ENCODE measurements at regions of chr17 and their contacts with region 1.

Region 1: GRCh38 chr17:9587969-9588656 is 11.7 kb downstream of the CFAP52 start:
- DNase-seq: no peak
- ATAC-seq: no peak
- H3K4me3 ChIP-seq: no peak overlapping the region
- H3K27ac ChIP-seq: no peak overlapping the region
- H3K4me1 ChIP-seq: no peaks in the 10 kb centered on the region
- H3K27me3 ChIP-seq: no peaks in the 10 kb centered on the region
- CTCF ChIP-seq: no peak

Region 2: DNA sequence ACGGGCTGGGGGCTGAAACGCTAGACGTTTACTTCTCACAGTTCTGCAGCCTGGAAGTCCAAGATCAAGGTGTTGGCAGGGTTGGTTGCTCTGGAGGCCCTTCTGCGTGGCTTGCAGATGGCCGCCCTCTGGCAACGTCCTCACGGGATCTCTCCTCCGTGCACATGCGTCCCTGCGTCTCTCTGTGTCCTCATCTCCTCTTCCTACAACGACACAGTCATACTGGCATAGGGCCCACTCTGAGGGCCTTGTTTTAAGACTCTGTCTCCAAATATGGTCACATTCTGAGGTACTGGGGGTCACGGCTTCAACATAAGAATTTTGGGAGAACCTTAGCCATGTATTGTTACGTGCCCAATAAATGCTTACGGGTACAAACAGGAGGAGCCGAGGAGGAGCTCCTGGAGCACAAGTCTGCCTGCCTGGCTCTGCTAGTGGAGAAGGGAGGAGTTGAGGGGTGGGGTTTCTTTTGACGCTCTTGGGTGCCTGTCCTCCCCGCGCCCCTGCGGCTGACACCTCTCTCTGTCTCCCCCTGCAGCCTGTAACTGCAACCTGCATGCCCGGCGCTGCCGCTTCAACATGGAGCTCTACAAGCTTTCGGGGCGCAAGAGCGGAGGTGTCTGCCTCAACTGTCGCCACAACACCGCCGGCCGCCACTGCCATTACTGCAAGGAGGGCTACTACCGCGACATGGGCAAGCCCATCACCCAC is 425.7 kb before region 1 on chr17:
- intact Hi-C with region 1: no loop called
- DNase-seq: no peak
- ATAC-seq: no peak
- H3K4me3 ChIP-seq: no peak overlapping the region
- H3K27ac ChIP-seq: peak overlapping the region in 1 of 4 donors; percentile 18
- H3K4me1 ChIP-seq: no peaks in the 10 kb centered on the region
- H3K27me3 ChIP-seq: no peaks in the 10 kb centered on the region
- CTCF ChIP-seq: no peak

Region 3: GRCh38 chr17:9676742-9677387 is 88.8 kb after region 1 on chr17:
- intact Hi-C with region 1: loop called in 1 of 3 experiments (anchors 10 kb)
- DNase-seq: peak in 1 of 6 donors; percentile 17
- ATAC-seq: peak; percentile 43 to 83 (median 67)
- H3K4me3 ChIP-seq: no peak overlapping the region
- H3K27ac ChIP-seq: no peak overlapping the region
- H3K4me1 ChIP-seq: no peaks in the 10 kb centered on the region
- H3K27me3 ChIP-seq: no peaks in the 10 kb centered on the region
- CTCF ChIP-seq: no peak

Region 4: GRCh38 chr17:9971991-9972599 is 384.0 kb after region 1 on chr17:
- intact Hi-C with region 1: no loop called
- DNase-seq: no peak
- ATAC-seq: peak in 1 of 4 donors; percentile 53
- H3K4me3 ChIP-seq: no peak overlapping the region
- H3K27ac ChIP-seq: no peak overlapping the region
- H3K4me1 ChIP-seq: no peaks in the 10 kb centered on the region
- H3K27me3 ChIP-seq: no peaks in the 10 kb centered on the region
- CTCF ChIP-seq: no peak

Measured in pancreas (tissue), 10 donors.